ENCODE measurements at regions of chr2 and their contacts with region 1.

Region 1: GRCh38 chr2:112941753-112942658 is 31.0 kb downstream of the IL37 start:
- DNase-seq: peak; percentile 37 to 74
- H3K4me3 ChIP-seq: no peak overlapping the region
- H3K27ac ChIP-seq: no peak overlapping the region
- H3K4me1 ChIP-seq: peaks cover 16% of the 10 kb centered on the region
- H3K27me3 ChIP-seq: no peaks in the 10 kb centered on the region
- CTCF ChIP-seq: peak; percentile 72

Region 2: GRCh38 chr2:112601751-112602150 is 340.3 kb before region 1 on chr2:
- CTCF ChIA-PET with region 1: no interaction called
- POLR2A ChIA-PET with region 1: no interaction called
- intact Hi-C with region 1: loop called (anchors 5 kb)
- DNase-seq: no peak
- H3K4me3 ChIP-seq: no peak overlapping the region
- H3K27ac ChIP-seq: no peak overlapping the region
- H3K4me1 ChIP-seq: peaks cover 23% of the 10 kb centered on the region
- H3K27me3 ChIP-seq: no peaks in the 10 kb centered on the region
- CTCF ChIP-seq: no peak

Region 3: GRCh38 chr2:112764071-112765044 is 177.6 kb before region 1 on chr2 and contains the start of gene CKAP2L:
- CTCF ChIA-PET with region 1: no interaction called
- POLR2A ChIA-PET with region 1: no interaction called
- intact Hi-C with region 1: loop called (anchors 1 kb)
- DNase-seq: peak; percentile 94
- H3K4me3 ChIP-seq: peak within 1 kb of the TSS; percentile 77
- H3K27ac ChIP-seq: 0 out of 2 replicates have a peak within 1 kb of the TSS, but pooled peaks have one; percentile 25
- H3K4me1 ChIP-seq: peaks cover 29% of the 10 kb centered on the region
- H3K27me3 ChIP-seq: no peaks in the 10 kb centered on the region
- CTCF ChIP-seq: no peak
- total RNA-seq, gene CKAP2L: 17.7 and 28.7 TPM in 2 replicates

Region 4: GRCh38 chr2:112958428-112959108 is 16.6 kb after region 1 on chr2:
- CTCF ChIA-PET with region 1: interaction called, 11 read pairs
- POLR2A ChIA-PET with region 1: no interaction called
- intact Hi-C with region 1: no loop called
- DNase-seq: peak in 1 of 2 experiments; percentile 40
- H3K4me3 ChIP-seq: no peak overlapping the region
- H3K27ac ChIP-seq: no peak overlapping the region
- H3K4me1 ChIP-seq: peaks cover 7% of the 10 kb centered on the region; the same call in 1 of the 2 replicates
- H3K27me3 ChIP-seq: no peaks in the 10 kb centered on the region
- CTCF ChIP-seq: peak; percentile 93

Region 5: GRCh38 chr2:113025737-113026136 is 83.7 kb after region 1 on chr2:
- CTCF ChIA-PET with region 1: no interaction called
- POLR2A ChIA-PET with region 1: no interaction called
- intact Hi-C with region 1: no loop called
- DNase-seq: no peak
- H3K4me3 ChIP-seq: no peak overlapping the region
- H3K27ac ChIP-seq: no peak overlapping the region
- H3K4me1 ChIP-seq: no peaks in the 10 kb centered on the region
- H3K27me3 ChIP-seq: no peaks in the 10 kb centered on the region
- CTCF ChIP-seq: no peak